ENCODE measurements at regions of chr18 and their contacts with region 1.

Region 1: GRCh38 chr18:71951001-71951400 is 593.1 kb downstream of the CBLN2 start:
- DNase-seq: no peak
- H3K4me3 ChIP-seq: no peak overlapping the region
- H3K27ac ChIP-seq: no peak overlapping the region
- H3K4me1 ChIP-seq: no peaks in the 10 kb centered on the region
- H3K27me3 ChIP-seq: no peaks in the 10 kb centered on the region
- CTCF ChIP-seq: no peak
- POLR2A ChIP-seq: no peak

Region 2: DNA sequence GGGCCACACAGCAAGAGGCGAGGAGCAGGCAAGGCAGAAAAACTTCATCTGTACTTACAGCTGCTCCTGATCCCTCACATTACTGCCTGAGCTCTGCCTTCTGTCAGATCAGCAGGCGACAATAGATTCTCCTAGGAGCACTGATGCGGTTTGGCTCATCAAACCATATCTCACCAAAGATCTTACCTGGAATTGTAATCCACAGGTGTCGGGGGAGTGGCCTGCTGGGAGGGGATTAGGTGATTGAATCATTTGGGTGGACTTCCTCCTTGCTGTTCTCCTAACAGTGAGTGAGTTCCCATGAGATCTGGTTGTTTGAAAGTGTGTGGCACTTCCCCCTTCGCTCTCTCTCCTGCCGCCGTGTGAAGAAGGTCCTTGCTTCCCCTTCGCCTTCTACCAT is 1014.8 kb before region 1 on chr18:
- intact Hi-C with region 1: loop called (anchors 5 kb)
- DNase-seq: no peak
- H3K4me3 ChIP-seq: no peak overlapping the region
- H3K27ac ChIP-seq: no peak overlapping the region
- H3K4me1 ChIP-seq: no peaks in the 10 kb centered on the region
- H3K27me3 ChIP-seq: no peaks in the 10 kb centered on the region
- CTCF ChIP-seq: no peak
- POLR2A ChIP-seq: no peak

Region 3: DNA sequence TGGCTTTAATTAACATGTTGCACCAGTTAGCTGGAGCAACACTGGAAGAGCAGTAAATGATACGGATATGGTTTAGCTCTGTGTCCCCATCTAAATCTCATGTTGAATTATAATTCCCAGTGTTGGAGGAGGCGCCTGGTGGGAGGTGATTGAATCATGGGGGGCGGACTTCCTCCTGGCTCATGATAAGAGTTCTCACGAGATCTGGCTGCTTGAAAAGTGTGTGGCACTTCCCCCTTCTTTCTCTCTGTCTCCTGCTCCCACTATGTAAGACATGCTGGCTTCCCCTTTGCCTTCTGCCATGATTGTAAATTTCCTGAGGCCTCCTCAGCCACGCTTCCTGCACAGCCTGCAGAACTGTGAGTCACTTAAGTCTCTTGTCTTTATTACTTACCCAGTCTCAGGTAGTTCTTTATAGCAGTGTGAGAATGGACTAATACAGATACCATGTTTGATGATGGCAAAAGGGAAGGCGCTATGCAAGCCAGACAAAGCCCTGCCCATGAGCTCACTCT is 698.6 kb before region 1 on chr18:
- intact Hi-C with region 1: no loop called
- DNase-seq: no peak
- H3K4me3 ChIP-seq: no peak overlapping the region
- H3K27ac ChIP-seq: no peak overlapping the region
- H3K4me1 ChIP-seq: no peaks in the 10 kb centered on the region
- H3K27me3 ChIP-seq: no peaks in the 10 kb centered on the region
- CTCF ChIP-seq: no peak
- POLR2A ChIP-seq: no peak

Region 4: DNA sequence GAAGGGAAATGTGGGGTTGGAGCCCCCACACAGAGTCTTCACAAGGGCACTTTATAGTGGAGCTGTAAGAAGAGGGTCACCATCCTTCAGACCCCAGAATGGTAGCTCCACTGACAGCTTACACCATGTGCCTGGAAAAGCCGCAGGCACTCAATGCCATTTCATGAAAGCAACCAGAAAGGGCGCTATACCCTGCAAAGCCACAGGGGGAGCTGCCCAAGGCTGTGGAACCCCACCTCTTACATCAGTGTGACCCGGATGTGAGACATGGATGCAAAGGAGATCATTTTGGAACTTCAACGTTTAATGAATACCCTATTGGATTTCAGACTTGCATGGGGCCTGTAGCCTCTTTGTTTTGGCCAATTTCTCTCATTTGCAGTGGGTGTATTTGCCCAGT is 101.6 kb before region 1 on chr18:
- intact Hi-C with region 1: no loop called
- DNase-seq: no peak
- H3K4me3 ChIP-seq: no peak overlapping the region
- H3K27ac ChIP-seq: no peak overlapping the region
- H3K4me1 ChIP-seq: no peaks in the 10 kb centered on the region
- H3K27me3 ChIP-seq: no peaks in the 10 kb centered on the region
- CTCF ChIP-seq: no peak
- POLR2A ChIP-seq: no peak

Measured in breast epithelium (tissue), 4 donors.